Right lobe of liver (tissue), 6 donors: ENCODE measurements at regions of chr10 and their contacts with region 1.

Region 1: GRCh38 chr10:102583435-102584417 is 60.6 kb upstream of the TRIM8 start:
- DNase-seq: peak; percentile 82 to 86 (median 83)
- ATAC-seq: peak; percentile 96 to 98 (median 98)
- H3K4me3 ChIP-seq: no peak overlapping the region
- H3K27ac ChIP-seq: peak overlapping the region in 2 of 3 donors; percentile 1 to 4
- H3K4me1 ChIP-seq: peaks cover 0 to 12% (median 5%) of the 10 kb centered on the region in 4 donors
- H3K27me3 ChIP-seq: no peaks in the 10 kb centered on the region
- CTCF ChIP-seq: peak; percentile 84 to 91 (median 86)
- POLR2A ChIP-seq: no peak

Region 2: DNA sequence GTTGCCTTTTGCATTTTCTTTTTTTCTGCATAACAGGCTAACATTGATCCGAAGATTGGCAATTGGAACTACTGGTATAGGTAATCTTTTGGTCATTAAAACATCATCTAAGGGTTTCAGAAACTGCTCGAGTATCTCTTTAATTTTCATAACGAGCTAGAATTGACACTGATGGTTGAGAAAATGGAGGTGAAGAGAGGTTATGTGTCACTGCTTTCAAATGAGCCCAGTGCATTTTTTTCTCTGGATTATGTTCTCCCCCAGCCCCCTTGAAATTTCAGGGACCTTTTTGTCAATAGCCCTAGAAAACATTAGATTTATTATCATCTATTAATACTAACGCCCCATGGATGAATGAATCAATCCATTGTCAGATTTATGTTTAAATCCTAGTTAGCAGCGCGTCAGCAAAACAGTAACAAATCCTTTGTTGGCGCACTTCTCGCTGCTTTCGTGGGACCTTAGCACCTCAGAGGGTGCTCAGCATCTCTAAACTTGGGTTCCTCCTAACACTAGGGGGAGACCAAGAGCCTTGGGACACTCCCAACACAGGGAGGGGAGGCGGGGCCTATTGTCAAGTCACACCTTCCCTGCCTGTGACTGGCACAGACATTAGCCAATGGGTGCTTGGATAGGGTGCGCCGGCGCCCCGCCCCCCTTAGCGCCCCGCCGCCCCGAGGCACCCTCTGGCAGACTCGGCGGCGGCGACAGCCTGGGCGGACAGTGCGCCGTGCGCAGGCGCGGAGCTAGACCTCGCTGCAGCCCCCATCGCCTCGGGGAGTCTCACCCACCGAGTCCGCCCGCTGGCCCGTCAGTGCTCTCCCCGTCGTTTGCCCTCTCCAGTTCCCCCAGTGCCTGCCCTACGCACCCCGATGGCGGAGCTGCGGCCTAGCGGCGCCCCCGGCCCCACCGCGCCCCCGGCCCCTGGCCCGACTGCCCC is 80.2 kb before region 1 on chr10 and contains the start of gene SUFU:
- intact Hi-C with region 1: loop called (anchors 10 kb)
- DNase-seq: peak; percentile 97 to 99 (median 98)
- ATAC-seq: peak; percentile 74 to 81 (median 79)
- H3K4me3 ChIP-seq: peak within 1 kb of the TSS; percentile 81 to 93 (median 92)
- H3K27ac ChIP-seq: peak within 1 kb of the TSS; percentile 61 to 83 (median 74)
- H3K4me1 ChIP-seq: peaks cover 0 to 20% (median 7%) of the 10 kb centered on the region in 4 donors
- H3K27me3 ChIP-seq: no peaks in the 10 kb centered on the region
- CTCF ChIP-seq: peak; percentile 89 to 99 (median 91)
- POLR2A ChIP-seq: peak; percentile 62
- total RNA-seq, gene SUFU: 4.2 to 6.2 (median 5.1) TPM